Head of caudate nucleus (tissue), 42 donors: ENCODE measurements at regions of chr18 and their contacts with region 1.

Region 1: GRCh38 chr18:57353940-57354461 is 1.6 kb downstream of the ST8SIA3 start:
- DNase-seq: peak in 35 of 42 donors; percentile 8 to 66 (median 33)

Region 2: DNA sequence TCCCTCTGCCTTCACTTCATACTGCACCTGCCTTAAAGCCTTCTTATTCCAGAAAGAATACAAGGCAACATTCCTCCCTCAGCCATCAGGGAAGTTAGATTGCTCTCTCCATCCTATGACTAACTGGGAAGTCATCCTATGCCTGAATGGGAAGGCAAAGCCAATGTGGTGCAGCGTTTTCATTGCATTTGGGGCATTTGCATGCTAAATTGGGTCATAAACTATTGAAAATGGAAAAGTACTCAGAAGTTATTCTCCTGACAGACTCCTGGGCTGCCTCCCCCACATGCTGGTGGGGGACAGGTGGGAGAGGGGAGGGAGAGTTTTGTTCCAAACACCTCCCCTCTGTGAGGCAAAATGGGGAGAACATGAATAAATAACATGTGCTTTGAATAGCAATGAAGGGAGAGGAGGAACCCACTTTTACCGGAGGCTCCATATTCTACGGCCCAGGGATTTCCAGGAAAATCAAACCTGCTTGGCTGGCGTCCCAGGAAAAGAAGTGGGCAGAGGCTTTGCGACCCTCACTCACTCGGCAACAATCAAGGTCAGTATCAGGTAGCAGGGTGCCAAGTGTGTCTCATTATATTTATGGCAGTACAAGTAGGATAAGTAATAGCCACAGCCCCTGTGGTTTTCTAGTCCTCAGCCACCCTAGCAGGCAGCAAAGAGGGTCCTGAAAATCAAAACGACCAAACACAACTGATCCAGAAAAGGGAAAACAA is 123.0 kb before region 1 on chr18:
- intact Hi-C with region 1: loop called (anchors 10 kb)
- DNase-seq: peak in 38 of 42 donors; percentile 16 to 87 (median 63)